Endothelial cell of umbilical vein (primary cell): ENCODE measurements at regions of chr14 and their contacts with region 1.

Region 1: DNA sequence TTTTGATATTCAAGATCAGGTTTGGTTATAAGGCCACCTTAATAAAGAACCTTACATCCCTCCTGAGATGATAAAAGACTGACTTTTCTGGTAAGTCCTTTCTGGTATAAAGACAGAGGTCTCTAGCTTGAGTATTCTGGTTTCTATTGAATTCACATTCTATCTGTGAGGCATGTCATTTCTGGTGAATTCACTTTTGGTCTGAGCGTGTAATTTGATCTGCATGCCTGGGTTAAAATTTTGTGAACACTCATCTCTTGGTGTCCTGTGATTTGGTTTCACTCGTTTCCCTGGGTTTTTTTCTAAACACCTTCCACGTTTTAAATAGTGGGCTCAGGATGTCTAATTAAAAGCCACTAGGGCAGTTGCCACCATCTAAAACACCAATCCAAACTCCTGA is 12.2 kb downstream of the EIF5 start:
- DNase-seq: no peak
- H3K4me3 ChIP-seq: no peak overlapping the region
- H3K27ac ChIP-seq: no peak overlapping the region
- H3K4me1 ChIP-seq: no peaks in the 10 kb centered on the region
- H3K27me3 ChIP-seq: no peaks in the 10 kb centered on the region
- CTCF ChIP-seq: no peak
- POLR2A ChIP-seq: no peak

Region 2: DNA sequence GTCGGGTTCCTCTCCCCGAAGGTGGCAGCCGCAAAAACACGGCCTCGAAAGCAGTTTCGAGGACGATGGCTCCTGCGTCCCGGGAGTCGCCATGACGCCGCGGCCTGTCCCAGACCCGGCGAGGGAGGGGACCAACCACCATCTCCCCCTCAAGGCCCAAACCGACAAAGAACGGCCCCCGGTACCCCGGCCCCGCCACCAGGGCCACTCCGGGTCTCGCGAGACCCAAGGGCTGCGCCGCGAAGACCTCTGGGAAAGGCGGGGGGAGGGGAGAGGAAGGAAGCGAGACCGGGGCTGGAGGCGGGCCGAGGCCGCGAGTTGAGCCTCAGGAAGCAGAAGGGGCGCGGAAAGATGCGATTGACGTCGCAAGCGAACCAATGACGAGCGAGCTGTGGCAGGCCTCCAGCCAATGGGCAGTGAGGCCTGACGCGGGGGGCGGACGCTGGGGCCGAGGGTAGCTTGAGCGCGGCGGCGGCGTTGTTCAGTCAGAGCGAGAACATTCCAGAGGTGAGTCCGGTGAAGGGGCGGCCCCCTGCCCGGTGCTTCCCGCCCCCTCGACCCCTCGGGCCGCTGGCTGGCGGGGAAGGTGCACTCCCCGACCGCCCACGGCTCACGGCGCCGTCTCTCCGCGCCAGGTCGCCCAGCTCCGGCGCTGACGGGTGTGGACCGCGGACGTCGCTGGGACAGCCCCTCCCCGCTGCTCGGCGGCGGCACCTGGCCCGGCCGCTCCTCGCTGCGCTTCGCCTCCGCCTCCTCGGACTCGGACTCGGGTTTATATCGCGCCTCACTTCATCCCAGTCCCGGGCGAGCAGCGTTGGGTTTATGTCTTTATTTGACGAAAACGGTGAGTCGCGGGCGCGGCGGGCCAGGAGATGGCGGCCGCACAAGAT is 12.3 kb before region 1 on chr14 and contains the start of gene EIF5:
- CTCF ChIA-PET with region 1: interaction called, 3 read pairs
- POLR2A ChIA-PET with region 1: interaction called, 39 read pairs
- dilution Hi-C with region 1: no loop called
- intact Hi-C with region 1: no loop called
- DNase-seq: peak; percentile 99
- H3K4me3 ChIP-seq: peak within 1 kb of the TSS; percentile 59 to 99 (median 78)
- H3K27ac ChIP-seq: peak within 1 kb of the TSS; percentile 93
- H3K4me1 ChIP-seq: peaks cover 12% of the 10 kb centered on the region
- H3K27me3 ChIP-seq: peaks cover 0 to 6% of the 10 kb centered on the region in 2 experiments
- CTCF ChIP-seq: no peak
- POLR2A ChIP-seq: peak; percentile 99
- total RNA-seq, gene EIF5: 294 and 313 TPM in 2 replicates